ENCODE measurements at regions of chr20 and their contacts with region 1.

Region 1: DNA sequence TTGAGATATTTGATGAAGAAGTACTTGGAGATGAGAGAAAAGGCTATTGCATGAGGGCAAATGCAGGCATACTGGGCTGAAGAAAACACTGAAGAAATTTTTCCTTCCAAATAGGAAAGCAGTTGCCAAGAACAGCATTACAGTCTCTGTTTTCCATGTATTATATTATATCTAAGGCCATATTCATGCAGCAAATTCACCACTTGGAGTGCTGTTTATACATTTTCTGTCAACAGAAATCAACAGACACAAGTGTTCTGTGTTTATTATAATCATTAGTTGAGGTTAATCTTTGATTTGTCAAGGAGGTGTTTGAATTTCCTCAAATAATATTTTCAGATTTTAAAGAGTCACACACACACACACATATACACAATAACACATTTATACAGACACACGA is 268.8 kb upstream of the PLCB4 start:
- DNase-seq: no peak
- ATAC-seq: no peak
- H3K4me3 ChIP-seq: no peak overlapping the region
- H3K4me3 Mint-ChIP-seq: no peak overlapping the region
- H3K27ac ChIP-seq: no peak overlapping the region
- H3K27ac Mint-ChIP-seq: no peak overlapping the region
- H3K4me1 ChIP-seq: no peaks in the 10 kb centered on the region
- H3K4me1 Mint-ChIP-seq: peaks cover 0 to 2% (median 0%) of the 10 kb centered on the region in 7 donors
- H3K27me3 ChIP-seq: no peaks in the 10 kb centered on the region
- H3K27me3 Mint-ChIP-seq: peaks cover 0 to 6% (median 0%) of the 10 kb centered on the region in 5 donors

Region 2: DNA sequence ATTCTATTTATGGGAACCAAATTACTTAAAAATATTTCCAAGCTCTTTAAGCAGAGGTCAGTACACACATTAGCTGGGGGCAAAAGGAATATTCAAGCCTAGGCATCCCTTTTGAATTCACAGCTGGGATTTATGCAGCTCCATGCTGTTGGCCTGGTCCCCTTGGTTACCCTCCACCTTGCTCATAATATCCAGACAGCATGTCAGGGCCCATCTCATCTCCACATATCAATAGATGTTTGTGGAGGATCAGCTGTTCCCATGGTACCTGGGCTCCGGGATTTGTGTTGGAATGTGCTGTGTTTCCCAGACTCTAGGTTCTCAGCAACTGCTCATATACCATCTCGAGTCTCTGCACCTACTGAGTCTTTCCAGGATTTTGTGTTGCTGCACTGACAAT is 1497.8 kb before region 1 on chr20:
- CTCF ChIA-PET with region 1: no interaction called
- POLR2A ChIA-PET with region 1: no interaction called
- intact Hi-C with region 1: loop called in 1 of 2 experiments (anchors 10 kb)
- DNase-seq: no peak
- ATAC-seq: no peak
- H3K4me3 ChIP-seq: no peak overlapping the region
- H3K4me3 Mint-ChIP-seq: no peak overlapping the region
- H3K27ac ChIP-seq: no peak overlapping the region
- H3K27ac Mint-ChIP-seq: no peak overlapping the region
- H3K4me1 ChIP-seq: no peaks in the 10 kb centered on the region
- H3K4me1 Mint-ChIP-seq: no peaks in the 10 kb centered on the region
- H3K27me3 ChIP-seq: no peaks in the 10 kb centered on the region
- H3K27me3 Mint-ChIP-seq: no peaks in the 10 kb centered on the region

Region 3: GRCh38 chr20:7859356-7859802 is 940.7 kb before region 1 on chr20:
- CTCF ChIA-PET with region 1: no interaction called
- POLR2A ChIA-PET with region 1: no interaction called
- intact Hi-C with region 1: no loop called
- DNase-seq: peak in 1 of 9 donors; percentile 7
- ATAC-seq: no peak
- H3K4me3 ChIP-seq: no peak overlapping the region
- H3K4me3 Mint-ChIP-seq: no peak overlapping the region
- H3K27ac ChIP-seq: no peak overlapping the region
- H3K27ac Mint-ChIP-seq: no peak overlapping the region
- H3K4me1 ChIP-seq: no peaks in the 10 kb centered on the region
- H3K4me1 Mint-ChIP-seq: peaks cover 0 to 5% (median 0%) of the 10 kb centered on the region in 7 donors
- H3K27me3 ChIP-seq: no peaks in the 10 kb centered on the region
- H3K27me3 Mint-ChIP-seq: peaks cover 0 to 12% (median 4%) of the 10 kb centered on the region in 5 donors

Measured in naive thymus-derived CD4-positive, alpha-beta T cell (primary cell).